IMR-90 (cell line): ENCODE measurements at regions of chr19 and their contacts with region 1.

Region 1: DNA sequence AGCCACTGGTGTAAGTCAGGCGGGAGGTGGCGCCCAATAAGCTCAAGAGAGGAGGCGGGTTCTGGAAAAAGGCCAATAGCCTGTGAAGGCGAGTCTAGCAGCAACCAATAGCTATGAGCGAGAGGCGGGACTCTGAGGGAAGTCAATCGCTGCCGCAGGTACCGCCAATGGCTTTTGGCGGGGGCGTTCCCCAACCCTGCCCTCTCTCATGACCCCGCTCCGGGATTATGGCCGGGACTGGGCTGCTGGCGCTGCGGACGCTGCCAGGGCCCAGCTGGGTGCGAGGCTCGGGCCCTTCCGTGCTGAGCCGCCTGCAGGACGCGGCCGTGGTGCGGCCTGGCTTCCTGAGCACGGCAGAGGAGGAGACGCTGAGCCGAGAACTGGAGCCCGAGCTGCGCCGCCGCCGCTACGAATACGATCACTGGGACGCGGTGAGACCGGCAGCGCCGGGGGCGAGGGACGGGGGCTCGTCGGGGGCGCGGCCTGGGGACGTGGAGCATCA is at the start of gene ALKBH7:
- DNase-seq: peak; percentile 100
- ATAC-seq: peak; percentile 83
- H3K4me3 ChIP-seq: peak within 1 kb of the TSS; percentile 79
- H3K27ac ChIP-seq: peak within 1 kb of the TSS; percentile 79
- H3K4me1 ChIP-seq: peaks cover 6% of the 10 kb centered on the region
- H3K27me3 ChIP-seq: no peaks in the 10 kb centered on the region
- CTCF ChIP-seq: no peak
- POLR2A ChIP-seq: peak; percentile 67; the same call in 1 of the 2 replicates
- RAD21 ChIP-seq: no peak
- total RNA-seq, gene ALKBH7: 9.3 and 10.3 TPM in 2 replicates

Region 2: GRCh38 chr19:6393074-6393983 is 20.7 kb after region 1 on chr19 and contains the start of gene GTF2F1:
- CTCF ChIA-PET with region 1: no interaction called
- POLR2A ChIA-PET with region 1: interaction called, 3 read pairs
- dilution Hi-C with region 1: no loop called
- in situ Hi-C with region 1: no loop called
- intact Hi-C with region 1: loop called (anchors 1 kb)
- DNase-seq: peak; percentile 95
- ATAC-seq: peak; percentile 94
- H3K4me3 ChIP-seq: peak within 1 kb of the TSS; percentile 66
- H3K27ac ChIP-seq: peak within 1 kb of the TSS; percentile 90
- H3K4me1 ChIP-seq: peaks cover 11% of the 10 kb centered on the region
- H3K27me3 ChIP-seq: no peaks in the 10 kb centered on the region
- CTCF ChIP-seq: peak; percentile 8; the same call in 1 of the 2 replicates
- POLR2A ChIP-seq: peak; percentile 68; the same call in 1 of the 2 replicates
- RAD21 ChIP-seq: no peak
- total RNA-seq, gene GTF2F1: 43.7 and 53.0 TPM in 2 replicates

Region 3: DNA sequence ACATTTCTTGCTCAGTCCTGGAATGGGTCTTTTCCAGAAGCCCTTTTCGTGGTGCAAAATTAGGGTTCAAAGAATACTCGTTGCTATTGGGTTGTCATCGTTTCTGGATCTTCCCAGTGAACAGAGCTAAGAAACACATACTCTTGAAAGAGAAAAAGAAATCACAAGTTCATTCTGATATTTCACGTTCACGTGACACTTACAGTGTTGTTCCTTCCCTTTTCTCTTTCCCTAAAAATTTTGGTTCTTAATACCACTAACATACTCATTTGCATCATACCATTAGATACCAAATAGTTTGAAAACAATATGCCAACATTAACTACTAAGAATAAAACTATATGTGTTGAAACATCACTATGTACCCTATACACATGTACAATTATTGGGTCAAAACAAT is 33.8 kb after region 1 on chr19:
- CTCF ChIA-PET with region 1: no interaction called
- POLR2A ChIA-PET with region 1: no interaction called
- dilution Hi-C with region 1: no loop called
- in situ Hi-C with region 1: no loop called
- intact Hi-C with region 1: no loop called
- DNase-seq: no peak
- ATAC-seq: no peak
- H3K4me3 ChIP-seq: no peak overlapping the region
- H3K27ac ChIP-seq: no peak overlapping the region
- H3K4me1 ChIP-seq: no peaks in the 10 kb centered on the region
- H3K27me3 ChIP-seq: no peaks in the 10 kb centered on the region
- CTCF ChIP-seq: no peak
- POLR2A ChIP-seq: no peak
- RAD21 ChIP-seq: no peak

Region 4: GRCh38 chr19:6429419-6430221 is 57.0 kb after region 1 on chr19:
- CTCF ChIA-PET with region 1: no interaction called
- POLR2A ChIA-PET with region 1: no interaction called
- dilution Hi-C with region 1: no loop called
- in situ Hi-C with region 1: no loop called
- intact Hi-C with region 1: no loop called
- DNase-seq: no peak
- ATAC-seq: no peak
- H3K4me3 ChIP-seq: no peak overlapping the region
- H3K27ac ChIP-seq: no peak overlapping the region
- H3K4me1 ChIP-seq: peaks cover 2% of the 10 kb centered on the region; the same call in 1 of the 2 replicates
- H3K27me3 ChIP-seq: peaks cover 8% of the 10 kb centered on the region; the same call in 1 of the 2 replicates
- CTCF ChIP-seq: no peak
- POLR2A ChIP-seq: no peak
- RAD21 ChIP-seq: no peak